ENCODE measurements at regions of chr1 and their contacts with region 1.

Region 1: GRCh38 chr1:110312188-110313121 is 26.7 kb upstream of the RBM15 start:
- DNase-seq: peak; percentile 71 to 91 (median 84)
- ATAC-seq: peak; percentile 96 to 98 (median 96)
- H3K4me3 ChIP-seq: no peak overlapping the region
- H3K27ac ChIP-seq: no peak overlapping the region
- H3K4me1 ChIP-seq: peaks cover 0 to 9% (median 0%) of the 10 kb centered on the region in 3 donors
- H3K27me3 ChIP-seq: no peaks in the 10 kb centered on the region
- CTCF ChIP-seq: peak; percentile 91 to 95 (median 93)

Region 2: GRCh38 chr1:110196917-110197765 is 115.3 kb before region 1 on chr1:
- intact Hi-C with region 1: loop called in 1 of 3 experiments (anchors 10 kb)
- DNase-seq: peak in 3 of 6 donors; percentile 31 to 42 (median 41)
- ATAC-seq: peak; percentile 86 to 95 (median 89)
- H3K4me3 ChIP-seq: no peak overlapping the region
- H3K27ac ChIP-seq: no peak overlapping the region
- H3K4me1 ChIP-seq: no peaks in the 10 kb centered on the region
- H3K27me3 ChIP-seq: no peaks in the 10 kb centered on the region
- CTCF ChIP-seq: peak; percentile 80 to 88 (median 83)

Region 3: DNA sequence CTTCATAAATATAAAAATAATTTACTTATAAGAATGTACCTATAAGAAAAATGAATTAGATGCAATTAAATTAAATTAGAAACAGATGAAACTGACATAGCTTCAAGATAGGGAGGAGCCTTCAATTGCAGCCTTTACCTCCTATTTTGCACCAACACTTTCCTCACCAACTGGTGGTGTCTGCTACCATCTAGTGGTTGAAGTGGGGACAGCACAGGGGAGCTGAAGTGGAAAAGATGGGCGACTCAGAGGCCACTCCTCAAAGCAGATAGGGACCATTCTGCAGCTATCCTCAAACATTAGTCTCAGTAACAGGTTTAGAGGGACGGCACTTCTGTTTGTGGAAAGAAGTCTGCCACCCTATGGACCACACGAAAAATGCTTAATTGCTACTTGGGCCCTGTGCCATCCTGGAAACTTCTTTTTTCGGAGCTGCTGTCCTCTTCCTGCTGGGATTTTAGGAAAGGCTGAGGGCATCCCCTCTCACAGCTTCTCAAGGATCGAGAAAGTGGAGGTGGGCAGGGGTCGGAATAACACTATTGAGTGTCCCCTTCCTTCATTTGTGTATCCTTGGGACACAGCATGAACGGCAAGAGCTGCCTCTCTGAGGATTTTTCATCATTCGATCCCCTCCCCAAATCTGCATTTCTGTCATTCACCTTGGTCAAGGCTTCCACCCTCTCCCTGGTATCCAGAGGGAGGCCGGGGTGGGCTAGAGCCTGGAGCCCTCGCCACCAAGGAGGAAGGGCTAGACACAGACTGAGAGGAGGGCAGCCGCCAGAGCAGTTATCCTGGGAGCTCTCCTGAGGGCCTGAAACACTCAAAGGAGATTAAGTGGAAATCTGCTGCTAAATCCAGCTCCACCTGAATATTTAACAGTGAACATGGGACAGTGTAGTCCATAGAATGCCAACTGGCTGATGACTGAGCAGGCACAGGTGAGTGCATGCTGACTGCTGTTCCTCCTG is 148.1 kb after region 1 on chr1:
- intact Hi-C with region 1: loop called in 1 of 3 experiments (anchors 10 kb)
- DNase-seq: peak in 5 of 6 donors; percentile 59 to 88 (median 77)
- ATAC-seq: peak; percentile 61 to 89 (median 87)
- H3K4me3 ChIP-seq: no peak overlapping the region
- H3K27ac ChIP-seq: no peak overlapping the region
- H3K4me1 ChIP-seq: peaks cover 15 to 18% (median 18%) of the 10 kb centered on the region in 3 donors
- H3K27me3 ChIP-seq: no peaks in the 10 kb centered on the region
- CTCF ChIP-seq: peak; percentile 90 to 94 (median 92)

Region 4: GRCh38 chr1:110524311-110525251 is 212.1 kb after region 1 on chr1:
- intact Hi-C with region 1: no loop called
- DNase-seq: peak in 2 of 6 donors; percentile 21 to 34
- ATAC-seq: peak; percentile 66 to 87 (median 84)
- H3K4me3 ChIP-seq: no peak overlapping the region
- H3K27ac ChIP-seq: no peak overlapping the region
- H3K4me1 ChIP-seq: no peaks in the 10 kb centered on the region
- H3K27me3 ChIP-seq: peaks cover 0 to 4% (median 0%) of the 10 kb centered on the region in 4 donors
- CTCF ChIP-seq: peak in 3 of 4 donors; percentile 33 to 46 (median 36)

Measured in pancreas (tissue), 10 donors.